ENCODE measurements at regions of chr12 and their contacts with region 1.

Region 1: GRCh38 chr12:95473884-95474659 is at the start of gene METAP2:
- DNase-seq: peak; percentile 97 to 98
- ATAC-seq: peak; percentile 99 to 100
- H3K4me3 ChIP-seq: peak within 1 kb of the TSS; percentile 82
- H3K27ac ChIP-seq: peak within 1 kb of the TSS; percentile 95 to 97
- H3K4me1 ChIP-seq: peaks cover 9% of the 10 kb centered on the region; the same call in 1 of the 3 replicates
- CTCF ChIP-seq: no peak
- EP300 ChIP-seq: no peak
- POLR2A ChIP-seq: peak; percentile 93
- RAD21 ChIP-seq: no peak
- polyA plus RNA-seq, gene METAP2: 134 and 205 TPM in 2 replicates

Region 2: GRCh38 chr12:95230313-95230712 is 243.8 kb before region 1 on chr12:
- CTCF ChIA-PET with region 1: no interaction called
- POLR2A ChIA-PET with region 1: interaction called, 11 read pairs
- DNase-seq: no peak
- ATAC-seq: peak; percentile 43 to 67; a peak in 3 of 6 replicates
- H3K4me3 ChIP-seq: no peak overlapping the region
- H3K27ac ChIP-seq: peak overlapping the region; percentile 70 to 83
- H3K4me1 ChIP-seq: peaks cover 56% of the 10 kb centered on the region
- CTCF ChIP-seq: no peak
- EP300 ChIP-seq: no peak
- POLR2A ChIP-seq: no peak
- RAD21 ChIP-seq: no peak

Region 3: GRCh38 chr12:95487024-95487423 is 13.0 kb after region 1 on chr12:
- CTCF ChIA-PET with region 1: interaction called, 4 read pairs
- POLR2A ChIA-PET with region 1: interaction called, 12 read pairs
- DNase-seq: no peak
- ATAC-seq: no peak
- H3K4me3 ChIP-seq: no peak overlapping the region
- H3K27ac ChIP-seq: no peak overlapping the region
- H3K4me1 ChIP-seq: 0 out of 3 replicates have a peak, but pooled peaks cover 3% of the 10 kb centered on the region
- CTCF ChIP-seq: no peak
- EP300 ChIP-seq: no peak
- POLR2A ChIP-seq: no peak
- RAD21 ChIP-seq: no peak

Region 4: GRCh38 chr12:95548539-95549391 is 74.7 kb after region 1 on chr12:
- CTCF ChIA-PET with region 1: no interaction called
- POLR2A ChIA-PET with region 1: no interaction called
- DNase-seq: peak; percentile 51 to 55
- ATAC-seq: peak; percentile 87 to 90
- H3K4me3 ChIP-seq: peak overlapping the region; percentile 88
- H3K27ac ChIP-seq: peak overlapping the region; percentile 78 to 89
- H3K4me1 ChIP-seq: no peaks in the 10 kb centered on the region
- CTCF ChIP-seq: no peak
- EP300 ChIP-seq: no peak
- POLR2A ChIP-seq: peak; percentile 42
- RAD21 ChIP-seq: no peak

Measured in A549 (cell line).